HEK293 (cell line): ENCODE measurements at regions of chr17 and their contacts with region 1.

Region 1: DNA sequence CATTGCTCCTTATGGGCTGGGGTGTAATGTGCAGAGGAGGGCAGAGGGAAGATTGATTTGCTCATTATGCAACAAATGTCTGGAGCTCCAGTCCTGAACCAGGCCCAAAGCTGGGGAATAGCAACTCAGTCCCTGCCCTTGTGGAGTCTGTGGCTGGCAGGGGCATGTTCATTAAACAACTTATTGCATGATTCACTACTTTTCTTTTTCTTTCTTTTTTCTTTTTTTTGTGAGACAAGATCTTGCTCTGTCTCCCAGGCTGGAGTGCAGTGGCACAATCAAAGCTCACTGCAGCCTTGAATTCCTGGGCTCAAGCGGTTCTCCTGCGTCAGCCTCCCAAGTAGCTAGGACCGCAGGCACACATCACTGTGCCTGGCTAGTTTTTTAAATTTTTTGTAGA is 23.1 kb downstream of the MSI2 start:
- H3K4me3 ChIP-seq: no peak overlapping the region
- H3K27ac ChIP-seq: no peak overlapping the region
- H3K4me1 ChIP-seq: peaks cover 15% of the 10 kb centered on the region
- CTCF ChIP-seq: no peak

Region 2: GRCh38 chr17:57255776-57256681 is 23.4 kb before region 1 on chr17 and contains the start of gene MSI2:
- CTCF ChIA-PET with region 1: no interaction called
- POLR2A ChIA-PET with region 1: interaction called, 12 read pairs
- H3K4me3 ChIP-seq: peak within 1 kb of the TSS; percentile 71
- H3K27ac ChIP-seq: peak within 1 kb of the TSS; percentile 61; the same call in 1 of the 2 replicates
- H3K4me1 ChIP-seq: peaks cover 11% of the 10 kb centered on the region; the same call in 1 of the 2 replicates
- CTCF ChIP-seq: peak; percentile 27

Region 3: DNA sequence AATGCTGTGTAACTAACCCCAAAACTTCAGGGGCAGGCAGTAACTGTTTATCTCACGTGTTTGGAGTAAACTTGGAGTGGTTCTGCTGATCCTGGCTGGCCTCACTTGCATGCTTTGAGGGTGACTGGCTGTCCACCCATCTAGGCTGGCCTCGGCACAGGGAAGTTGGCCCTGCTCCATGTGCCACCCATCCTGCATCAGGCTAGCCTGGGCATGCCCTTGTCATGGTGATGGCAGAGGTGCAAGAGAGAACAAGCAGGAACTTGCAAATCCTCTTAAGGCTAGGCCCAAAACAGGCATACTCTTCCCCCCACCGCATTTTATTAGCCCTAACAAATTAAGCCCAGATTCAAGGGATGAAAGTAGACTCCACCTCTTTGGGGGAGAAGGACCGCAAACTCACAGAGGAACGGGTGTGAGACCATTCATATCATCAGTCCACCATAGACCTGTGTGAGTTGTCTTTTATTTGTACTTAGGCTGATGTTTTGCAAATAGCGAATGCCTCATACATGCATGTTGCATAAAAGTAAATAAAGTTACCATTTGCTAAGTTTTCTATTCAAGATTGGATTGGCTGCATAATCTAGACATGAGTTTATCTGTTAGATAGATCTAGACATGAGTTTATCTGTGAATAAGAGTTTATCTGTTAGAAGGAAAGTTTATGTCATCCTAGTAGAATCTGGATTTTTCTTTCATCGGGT is 244.6 kb after region 1 on chr17:
- CTCF ChIA-PET with region 1: no interaction called
- POLR2A ChIA-PET with region 1: no interaction called
- H3K4me3 ChIP-seq: no peak overlapping the region
- H3K27ac ChIP-seq: peak overlapping the region; percentile 33
- H3K4me1 ChIP-seq: peaks cover 30% of the 10 kb centered on the region
- CTCF ChIP-seq: no peak